ENCODE measurements at regions of chr1 and their contacts with region 1.

Region 1: DNA sequence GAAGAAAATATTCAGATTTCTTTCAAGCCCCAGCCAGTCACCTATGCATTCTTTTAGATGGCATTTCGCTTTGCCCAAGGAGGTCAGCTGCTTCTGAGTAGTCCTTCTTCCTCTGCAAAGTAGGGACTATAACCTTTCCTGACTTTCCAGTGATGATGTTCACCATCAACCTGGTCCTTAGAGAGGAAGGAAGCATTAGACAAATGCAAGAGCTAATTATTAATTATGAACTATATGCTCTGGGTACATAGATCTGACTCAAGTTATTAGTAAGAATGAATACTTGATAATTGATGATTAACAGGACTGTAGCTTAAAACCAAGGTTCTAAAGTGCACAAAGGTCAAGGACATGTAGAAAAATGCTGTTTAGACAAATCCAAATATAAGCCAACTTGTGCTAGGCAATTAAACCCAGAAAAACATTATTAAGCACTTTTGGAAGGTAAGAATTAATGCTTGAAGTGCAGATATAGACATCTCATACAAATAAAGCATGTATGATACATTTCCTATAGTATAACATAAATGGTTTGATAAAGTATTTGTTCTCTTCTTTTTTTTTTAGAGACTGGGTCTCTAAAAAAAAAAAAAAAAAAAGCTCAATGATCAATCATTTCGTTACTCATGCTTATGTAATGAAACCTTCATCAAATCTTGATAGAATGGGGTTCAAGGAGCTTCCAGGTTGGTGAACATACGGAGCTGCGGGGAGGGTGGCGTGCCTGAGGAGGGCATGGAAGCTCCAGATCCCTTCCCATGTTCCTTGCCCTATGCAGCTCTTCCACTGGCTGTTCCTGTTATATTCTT is 11.2 kb upstream of the AGMAT start:
- DNase-seq: no peak
- H3K4me3 Mint-ChIP-seq: no peak overlapping the region
- H3K27ac Mint-ChIP-seq: no peak overlapping the region
- H3K4me1 Mint-ChIP-seq: no peaks in the 10 kb centered on the region
- H3K27me3 Mint-ChIP-seq: peaks cover 17% of the 10 kb centered on the region
- CTCF ChIP-seq: no peak

Region 2: GRCh38 chr1:15703562-15703961 is 107.5 kb after region 1 on chr1:
- CTCF ChIA-PET with region 1: interaction called, 8 read pairs
- POLR2A ChIA-PET with region 1: no interaction called
- intact Hi-C with region 1: loop called (anchors 1 kb)
- DNase-seq: peak; percentile 86
- H3K4me3 Mint-ChIP-seq: peak overlapping the region; percentile 29
- H3K27ac Mint-ChIP-seq: peak overlapping the region; percentile 96
- H3K4me1 Mint-ChIP-seq: peaks cover 20% of the 10 kb centered on the region
- H3K27me3 Mint-ChIP-seq: no peaks in the 10 kb centered on the region
- CTCF ChIP-seq: no peak

Region 3: GRCh38 chr1:15741183-15741850 is 145.3 kb after region 1 on chr1:
- CTCF ChIA-PET with region 1: interaction called, 7 read pairs
- POLR2A ChIA-PET with region 1: interaction called, 4 read pairs
- intact Hi-C with region 1: loop called (anchors 1 kb)
- DNase-seq: peak; percentile 86
- H3K4me3 Mint-ChIP-seq: no peak overlapping the region
- H3K27ac Mint-ChIP-seq: no peak overlapping the region
- H3K4me1 Mint-ChIP-seq: peaks cover 7% of the 10 kb centered on the region
- H3K27me3 Mint-ChIP-seq: no peaks in the 10 kb centered on the region
- CTCF ChIP-seq: peak; percentile 92